ENCODE measurements at regions of chr3 and their contacts with region 1.

Region 1: GRCh38 chr3:109731620-109732473 is 394.5 kb upstream of the DPPA4 start:
- DNase-seq: peak; percentile 51
- H3K4me3 ChIP-seq: no peak overlapping the region
- H3K27ac ChIP-seq: no peak overlapping the region
- H3K4me1 ChIP-seq: peaks cover 0 to 3% (median 0%) of the 10 kb centered on the region in 4 donors
- H3K27me3 ChIP-seq: no peaks in the 10 kb centered on the region
- CTCF ChIP-seq: peak; percentile 82 to 89 (median 86)
- EP300 ChIP-seq: no peak
- POLR2A ChIP-seq: no peak

Region 2: DNA sequence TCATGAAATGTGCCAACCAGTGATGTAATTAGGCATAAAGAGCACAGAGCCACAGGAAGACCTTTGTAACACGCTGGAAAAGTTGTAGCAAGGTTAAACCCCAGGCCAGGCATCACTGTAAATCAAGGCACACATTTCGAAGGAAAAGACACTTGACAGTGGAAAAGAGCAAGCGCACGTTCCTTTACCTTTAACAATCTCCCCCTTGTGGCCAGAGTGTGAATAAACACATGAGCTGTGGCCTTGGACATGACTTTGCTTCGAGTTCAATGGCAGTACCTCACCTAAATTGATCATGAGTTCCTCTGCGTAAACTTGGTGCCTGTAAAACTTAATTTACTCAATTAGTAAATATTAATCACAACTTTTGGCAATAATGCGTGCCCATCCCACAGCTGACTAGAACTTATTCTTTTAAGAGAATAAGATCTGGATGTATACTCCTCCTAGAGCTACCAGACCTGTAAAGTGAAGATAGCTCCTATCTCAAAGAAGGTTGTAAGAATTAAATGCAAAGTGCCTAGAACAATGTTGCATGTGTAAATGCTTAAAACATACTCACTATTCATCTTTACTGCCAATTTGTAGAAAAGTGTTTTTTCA is 582.8 kb after region 1 on chr3:
- in situ Hi-C with region 1: loop called (anchors 10 to 25 kb)
- intact Hi-C with region 1: no loop called
- DNase-seq: peak; percentile 53
- H3K4me3 ChIP-seq: no peak overlapping the region
- H3K27ac ChIP-seq: no peak overlapping the region
- H3K4me1 ChIP-seq: no peaks in the 10 kb centered on the region
- H3K27me3 ChIP-seq: no peaks in the 10 kb centered on the region
- CTCF ChIP-seq: peak; percentile 71 to 81 (median 77)
- EP300 ChIP-seq: no peak
- POLR2A ChIP-seq: no peak

Region 3: GRCh38 chr3:111103807-111104206 is 1372.0 kb after region 1 on chr3:
- in situ Hi-C with region 1: no loop called
- intact Hi-C with region 1: no loop called
- DNase-seq: no peak
- H3K4me3 ChIP-seq: no peak overlapping the region
- H3K27ac ChIP-seq: no peak overlapping the region
- H3K4me1 ChIP-seq: peaks cover 0 to 11% (median 5%) of the 10 kb centered on the region in 4 donors
- H3K27me3 ChIP-seq: no peaks in the 10 kb centered on the region
- CTCF ChIP-seq: no peak
- EP300 ChIP-seq: no peak
- POLR2A ChIP-seq: no peak

Measured in transverse colon (tissue), 4 donors.